Posterior vena cava (tissue), 2 donors: ENCODE measurements at regions of chr6 and their contacts with region 1.

Region 1: DNA sequence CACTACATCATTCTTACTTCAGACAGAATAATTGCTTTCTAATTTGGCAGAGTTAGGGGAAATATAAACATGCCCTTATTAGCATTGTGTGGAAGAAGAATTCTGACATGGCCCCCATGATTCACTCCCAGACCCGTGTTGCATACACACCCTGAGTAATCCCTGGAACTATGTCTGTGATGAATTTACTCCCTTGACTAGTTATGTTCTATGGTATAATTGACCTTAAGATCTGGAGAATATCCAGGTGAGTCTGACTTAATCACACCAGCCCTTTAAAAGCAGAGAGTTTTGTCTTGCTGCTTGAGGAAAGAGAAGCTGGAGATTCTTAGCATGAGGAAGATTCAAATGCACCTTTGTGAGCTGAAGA is 262.9 kb downstream of the SOX4 start:
- DNase-seq: no peak

Region 2: GRCh38 chr6:20722455-20722854 is 1134.0 kb before region 1 on chr6:
- intact Hi-C with region 1: loop called in 1 of 2 experiments (anchors 5 kb)
- DNase-seq: no peak